Brain microvascular endothelial cell (primary cell): ENCODE measurements at regions of chr10 and their contacts with region 1.

Region 1: GRCh38 chr10:104580774-104581675 is 60.1 kb upstream of the SORCS3 start:
- DNase-seq: peak; percentile 60
- H3K4me3 ChIP-seq: no peak overlapping the region
- H3K27ac ChIP-seq: no peak overlapping the region
- H3K27me3 ChIP-seq: no peaks in the 10 kb centered on the region
- CTCF ChIP-seq: peak; percentile 93

Region 2: DNA sequence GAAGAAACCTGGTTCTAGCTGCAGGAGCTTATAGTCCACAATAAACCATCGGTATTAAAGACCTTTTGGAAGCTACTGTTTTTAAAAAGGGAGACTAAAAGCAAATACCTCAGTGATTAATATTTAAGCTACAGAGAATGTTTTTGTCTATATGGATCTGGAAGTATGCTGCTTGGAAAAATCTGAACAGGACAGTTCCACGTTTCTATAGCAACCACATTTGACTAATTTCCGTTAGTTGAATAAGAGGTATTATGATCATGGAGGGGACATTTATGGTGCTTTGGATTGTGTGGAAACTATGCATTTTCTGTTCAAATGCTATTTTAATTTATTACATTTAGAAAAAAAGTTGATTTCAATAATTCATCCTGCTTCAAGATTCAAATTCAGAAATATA is 1192.8 kb before region 1 on chr10:
- in situ Hi-C with region 1: no loop called
- DNase-seq: no peak
- H3K4me3 ChIP-seq: no peak overlapping the region
- H3K27ac ChIP-seq: no peak overlapping the region
- H3K27me3 ChIP-seq: no peaks in the 10 kb centered on the region
- CTCF ChIP-seq: no peak

Region 3: GRCh38 chr10:104406715-104407650 is 174.0 kb before region 1 on chr10:
- in situ Hi-C with region 1: loop called (anchors 25 kb)
- DNase-seq: peak; percentile 22
- H3K4me3 ChIP-seq: no peak overlapping the region
- H3K27ac ChIP-seq: no peak overlapping the region
- H3K27me3 ChIP-seq: no peaks in the 10 kb centered on the region
- CTCF ChIP-seq: peak; percentile 54

Region 4: DNA sequence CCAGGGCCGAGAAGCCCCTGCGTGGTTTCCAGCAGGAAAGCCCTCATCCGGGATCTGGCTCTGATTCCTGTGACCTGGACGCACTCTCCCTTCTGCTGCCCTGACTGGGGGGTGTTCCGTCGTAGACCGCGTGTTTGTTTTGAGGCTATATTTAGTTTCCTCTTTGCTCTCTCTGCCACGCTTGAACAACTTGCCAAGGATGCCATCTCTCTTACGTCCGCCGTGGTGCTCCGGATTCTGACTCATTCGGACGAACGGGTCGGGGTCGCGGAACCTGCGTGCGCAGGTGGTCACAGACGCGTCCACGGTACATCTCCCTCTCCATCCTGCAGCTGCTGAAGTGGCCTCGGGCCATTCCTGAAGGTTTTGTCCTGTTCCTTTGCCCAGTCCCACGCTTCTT is 49.7 kb after region 1 on chr10:
- in situ Hi-C with region 1: no loop called
- DNase-seq: no peak
- H3K4me3 ChIP-seq: no peak overlapping the region
- H3K27ac ChIP-seq: no peak overlapping the region
- H3K27me3 ChIP-seq: no peaks in the 10 kb centered on the region
- CTCF ChIP-seq: no peak

Region 5: GRCh38 chr10:104796823-104797222 is 215.8 kb after region 1 on chr10:
- in situ Hi-C with region 1: no loop called
- DNase-seq: no peak
- H3K4me3 ChIP-seq: no peak overlapping the region
- H3K27ac ChIP-seq: no peak overlapping the region
- H3K27me3 ChIP-seq: no peaks in the 10 kb centered on the region
- CTCF ChIP-seq: no peak

Region 6: GRCh38 chr10:104835422-104835821 is 254.4 kb after region 1 on chr10:
- in situ Hi-C with region 1: no loop called
- DNase-seq: no peak
- H3K4me3 ChIP-seq: no peak overlapping the region
- H3K27ac ChIP-seq: no peak overlapping the region
- H3K27me3 ChIP-seq: no peaks in the 10 kb centered on the region
- CTCF ChIP-seq: no peak